Thyroid gland (tissue), 4 donors: ENCODE measurements at regions of chr6 and their contacts with region 1.

Region 1: DNA sequence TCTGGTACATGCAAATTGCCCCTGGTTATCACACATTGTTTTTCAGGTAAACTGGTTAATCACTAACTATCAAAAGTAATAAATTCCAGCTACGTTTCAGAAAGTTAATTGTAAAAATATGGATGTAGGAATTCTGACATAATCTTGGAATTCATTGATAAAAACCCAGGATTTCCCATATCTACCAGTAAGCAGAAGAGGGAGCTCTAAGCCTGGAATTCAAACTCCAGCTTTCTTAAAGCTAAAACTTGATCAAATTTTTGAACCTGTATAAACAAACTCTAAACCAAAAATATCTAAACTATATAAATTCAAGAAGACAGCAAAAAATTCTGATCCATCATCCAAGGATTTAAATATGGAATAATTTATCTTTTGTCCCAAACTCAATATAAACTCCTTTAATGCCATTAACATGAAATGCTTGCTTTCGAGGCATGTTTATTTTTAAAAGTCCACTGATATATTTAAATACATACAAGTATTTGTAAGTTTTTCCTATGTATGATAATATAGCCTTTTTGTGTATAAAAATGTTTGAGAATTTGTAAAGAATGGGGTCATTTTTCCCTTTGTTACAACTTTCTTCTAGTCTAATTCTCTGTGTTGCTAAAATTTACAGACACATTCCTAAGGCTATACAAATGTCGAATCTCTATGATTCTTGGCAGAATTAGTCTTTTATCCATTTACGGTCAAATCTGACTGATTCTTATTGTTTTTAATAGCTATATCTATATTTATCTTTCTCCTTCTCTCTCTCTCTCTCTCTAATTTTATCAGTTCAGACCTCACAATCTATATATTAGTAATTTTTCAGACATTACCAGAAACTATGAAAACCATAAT is 91.4 kb upstream of the RNF217 start:
- DNase-seq: no peak
- H3K4me3 ChIP-seq: no peak overlapping the region
- H3K27ac ChIP-seq: no peak overlapping the region
- H3K4me1 ChIP-seq: no peaks in the 10 kb centered on the region
- H3K27me3 ChIP-seq: no peaks in the 10 kb centered on the region
- CTCF ChIP-seq: peak; percentile 16 to 90 (median 62)
- POLR2A ChIP-seq: no peak

Region 2: DNA sequence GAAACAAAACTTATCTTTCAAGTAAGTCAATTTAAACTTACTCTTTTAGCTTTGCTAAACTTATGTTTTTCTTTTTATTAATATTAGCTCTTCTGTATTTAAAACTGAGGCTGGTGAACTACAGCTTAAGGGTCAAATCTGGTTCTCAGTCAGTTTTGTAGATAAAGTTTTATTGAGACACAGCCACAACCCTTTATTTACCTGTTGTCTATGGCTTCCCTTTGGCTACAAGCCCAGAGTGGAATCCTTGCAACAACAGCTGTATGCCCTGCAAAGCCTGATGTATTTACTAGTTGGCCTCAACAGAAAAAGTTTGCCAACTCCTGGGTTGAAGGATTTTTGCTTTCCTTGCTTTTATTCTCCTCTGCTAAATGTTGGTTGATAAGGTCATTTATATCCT is 400.0 kb before region 1 on chr6:
- intact Hi-C with region 1: no loop called
- DNase-seq: no peak
- H3K4me3 ChIP-seq: no peak overlapping the region
- H3K27ac ChIP-seq: no peak overlapping the region
- H3K4me1 ChIP-seq: peaks cover 7 to 17% of the 10 kb centered on the region in 2 donors
- H3K27me3 ChIP-seq: no peaks in the 10 kb centered on the region
- CTCF ChIP-seq: no peak
- POLR2A ChIP-seq: no peak

Region 3: GRCh38 chr6:125114248-125114858 is 243.5 kb after region 1 on chr6:
- intact Hi-C with region 1: loop called (anchors 5 kb)
- DNase-seq: peak; percentile 58 to 65
- H3K4me3 ChIP-seq: no peak overlapping the region
- H3K27ac ChIP-seq: no peak overlapping the region
- H3K4me1 ChIP-seq: no peaks in the 10 kb centered on the region
- H3K27me3 ChIP-seq: no peaks in the 10 kb centered on the region
- CTCF ChIP-seq: peak; percentile 64 to 91 (median 80)
- POLR2A ChIP-seq: no peak